Activated CD4-positive, alpha-beta T cell treated with anti-CD3 and anti-CD28 coated beads, Interleukin-2, amount 10 ng/mL, durations not matched to agents 24 days and 14 days (primary cell): ENCODE measurements at regions of chr1 and their contacts with region 1.

Region 1: DNA sequence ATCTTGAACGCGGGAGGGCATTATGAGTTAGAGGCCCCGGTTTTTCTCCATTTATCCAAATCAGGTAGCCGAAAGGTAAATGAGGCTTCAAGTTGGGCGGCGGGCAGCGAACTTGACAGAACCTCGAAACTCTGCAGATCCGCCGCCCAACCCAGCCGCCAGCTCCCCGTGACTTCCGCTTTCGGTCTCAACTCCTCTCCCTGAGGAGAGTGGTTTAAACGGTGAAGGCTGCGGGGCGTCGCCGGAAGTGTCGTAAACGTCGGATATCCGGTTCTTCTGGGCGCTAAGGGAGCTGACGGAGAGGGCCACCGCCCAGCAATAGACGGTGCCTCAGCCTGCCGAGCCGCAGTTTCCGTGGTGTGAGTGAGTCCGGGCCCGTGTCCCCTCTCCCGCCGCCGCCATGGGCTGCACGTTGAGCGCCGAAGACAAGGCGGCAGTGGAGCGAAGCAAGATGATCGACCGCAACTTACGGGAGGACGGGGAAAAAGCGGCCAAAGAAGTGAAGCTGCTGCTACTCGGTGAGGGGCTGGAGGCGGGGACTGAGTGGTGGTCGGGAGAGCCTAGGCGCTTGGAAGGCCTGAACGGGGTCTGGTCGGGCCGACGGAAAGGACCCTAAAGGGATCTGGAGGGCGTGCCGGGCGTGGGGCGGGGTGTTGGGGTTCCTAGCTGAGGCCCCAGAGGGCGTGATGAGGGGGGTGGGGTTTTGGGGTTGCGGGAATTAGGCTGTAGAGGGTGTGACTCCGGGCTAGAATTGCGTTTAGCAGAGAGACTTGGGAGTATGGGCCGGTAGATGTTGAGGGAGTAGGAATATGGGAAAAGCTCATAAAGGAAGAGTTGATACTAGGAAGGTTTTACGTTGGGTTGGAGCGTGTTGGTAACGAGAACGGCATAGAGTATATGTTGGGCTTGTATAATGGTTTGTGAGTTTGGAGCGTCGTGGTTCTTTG is at the start of gene GNAI3:
- DNase-seq: peak; percentile 99
- H3K4me3 Mint-ChIP-seq: peak within 1 kb of the TSS; percentile 95
- H3K27ac Mint-ChIP-seq: peak within 1 kb of the TSS; percentile 96
- H3K4me1 Mint-ChIP-seq: peaks cover 46% of the 10 kb centered on the region
- H3K27me3 Mint-ChIP-seq: no peaks in the 10 kb centered on the region
- total RNA-seq, gene GNAI3: 8.7 and 8.8 TPM in 2 replicates

Region 2: DNA sequence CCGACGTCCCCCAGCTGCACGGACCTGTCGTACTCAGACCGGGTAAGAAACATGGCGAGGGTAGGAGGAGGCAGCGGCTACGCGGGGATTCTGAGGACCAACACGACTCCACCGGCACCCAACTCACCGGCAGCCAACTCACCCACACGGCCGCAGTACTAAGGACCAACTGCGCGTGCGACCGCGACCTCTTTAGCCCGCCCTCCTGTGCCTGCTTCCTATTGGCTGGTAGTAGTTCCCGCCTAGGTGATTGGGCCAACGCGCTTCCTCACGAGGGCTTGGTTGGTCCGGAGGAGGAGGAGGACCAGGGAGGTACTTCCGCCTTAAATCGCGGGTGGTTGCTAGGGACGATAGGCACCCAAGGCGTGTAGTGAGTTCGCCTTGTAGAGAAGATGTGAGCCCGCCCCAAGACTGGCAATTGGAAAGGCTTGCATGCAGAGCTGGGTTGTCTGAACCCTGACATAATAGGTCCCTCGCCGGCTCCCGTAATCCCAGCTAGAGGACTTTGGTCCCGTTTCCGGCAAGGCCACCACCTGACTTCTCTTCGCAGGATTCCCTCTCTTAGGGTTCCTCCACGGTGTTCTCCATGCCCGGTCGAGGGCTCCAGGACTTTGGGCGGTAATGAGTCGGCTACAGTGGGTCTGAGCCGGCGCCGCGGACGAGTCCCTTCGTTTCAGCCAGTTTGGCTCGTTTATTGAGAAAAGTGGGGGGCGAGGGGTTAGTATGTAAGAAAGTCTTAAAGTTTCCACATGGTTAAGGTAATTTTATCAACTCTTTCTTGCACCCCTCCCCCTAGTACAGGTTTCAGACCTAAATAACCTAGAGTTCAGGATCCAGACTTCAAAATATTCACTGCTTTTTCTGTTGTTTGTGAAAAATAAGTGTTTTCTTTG is 122.1 kb before region 1 on chr1 and contains the start of gene PSMA5:
- intact Hi-C with region 1: loop called (anchors 5 kb)
- DNase-seq: peak; percentile 98
- H3K4me3 Mint-ChIP-seq: peak within 1 kb of the TSS; percentile 94
- H3K27ac Mint-ChIP-seq: peak within 1 kb of the TSS; percentile 97
- H3K4me1 Mint-ChIP-seq: peaks cover 27% of the 10 kb centered on the region
- H3K27me3 Mint-ChIP-seq: peaks cover 2% of the 10 kb centered on the region
- total RNA-seq, gene PSMA5: 262 and 270 TPM in 2 replicates

Region 3: DNA sequence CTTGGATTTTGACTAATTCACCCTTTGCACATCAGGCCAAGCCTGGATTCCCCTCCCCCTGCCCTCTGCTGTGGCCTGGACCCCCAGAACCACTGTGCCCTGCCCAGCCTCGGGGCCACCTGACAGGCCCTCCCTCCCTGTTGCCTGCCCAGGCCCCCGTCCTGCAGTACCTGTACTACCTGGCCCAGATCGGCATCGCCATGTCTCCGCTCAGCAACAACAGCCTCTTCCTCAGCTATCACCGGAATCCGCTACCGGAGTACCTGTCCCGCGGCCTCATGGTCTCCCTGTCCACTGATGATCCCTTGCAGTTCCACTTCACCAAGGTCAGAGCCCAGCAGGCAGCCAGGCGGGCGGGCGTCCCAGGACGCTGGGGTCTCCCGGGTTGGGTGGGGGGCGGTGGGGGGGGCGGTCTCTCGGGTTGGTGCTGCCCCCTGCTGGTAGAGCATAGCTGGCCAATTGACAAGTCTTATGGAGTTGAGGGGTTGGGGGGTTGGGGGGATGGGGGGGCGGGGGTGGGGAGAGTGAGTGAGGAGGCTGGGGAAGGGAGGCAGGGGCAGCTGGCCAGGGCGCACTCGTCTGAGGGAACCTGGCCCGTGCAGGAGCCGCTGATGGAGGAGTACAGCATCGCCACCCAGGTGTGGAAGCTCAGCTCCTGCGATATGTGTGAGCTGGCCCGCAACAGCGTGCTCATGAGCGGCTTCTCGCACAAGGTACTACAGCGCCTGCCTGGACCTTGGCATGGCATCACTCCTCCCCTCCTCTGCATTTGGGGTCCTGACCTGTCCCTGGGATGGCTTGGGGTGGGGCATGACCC is 81.7 kb after region 1 on chr1:
- intact Hi-C with region 1: loop called (anchors 1 kb)
- DNase-seq: peak; percentile 77
- H3K4me3 Mint-ChIP-seq: no peak overlapping the region
- H3K27ac Mint-ChIP-seq: no peak overlapping the region
- H3K4me1 Mint-ChIP-seq: peaks cover 16% of the 10 kb centered on the region
- H3K27me3 Mint-ChIP-seq: no peaks in the 10 kb centered on the region

Region 4: DNA sequence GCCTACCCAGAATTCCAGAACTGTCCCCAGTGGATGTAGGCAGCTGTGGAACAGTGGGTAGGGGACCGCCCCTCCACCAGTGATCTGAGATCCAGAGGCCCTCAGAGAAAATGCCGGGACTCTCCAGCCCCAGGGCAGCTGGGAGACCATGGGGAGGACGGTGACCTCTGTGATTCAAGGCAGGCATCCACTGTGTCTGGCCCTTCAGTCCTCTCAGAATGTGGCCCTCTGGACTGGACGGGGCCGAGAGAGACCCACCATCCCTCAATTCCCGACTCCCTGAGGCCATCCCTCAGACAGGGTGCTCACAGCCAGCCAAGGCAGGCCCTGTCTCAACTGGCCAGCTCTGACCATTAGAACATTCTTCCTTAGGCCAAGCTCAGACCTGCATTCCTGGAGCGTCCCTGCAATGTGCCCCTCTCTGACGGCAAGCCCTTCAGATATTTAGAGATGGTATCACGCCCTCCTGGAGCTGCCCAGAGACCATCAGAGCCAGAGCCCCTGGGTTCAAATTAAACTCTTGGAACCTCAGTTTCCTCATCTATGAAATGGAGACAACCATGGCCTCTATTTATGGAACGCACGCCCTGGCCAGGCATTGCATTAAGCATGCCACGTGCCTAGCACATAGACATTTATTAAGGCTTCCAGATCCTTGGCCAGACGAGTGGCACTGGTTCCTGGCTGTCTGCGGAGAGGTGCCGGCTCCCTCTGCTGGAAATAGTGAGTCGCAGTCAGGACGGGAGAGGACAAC is 224.7 kb after region 1 on chr1:
- intact Hi-C with region 1: loop called (anchors 1 kb)
- DNase-seq: peak; percentile 91
- H3K4me3 Mint-ChIP-seq: no peak overlapping the region
- H3K27ac Mint-ChIP-seq: no peak overlapping the region
- H3K4me1 Mint-ChIP-seq: peaks cover 20% of the 10 kb centered on the region
- H3K27me3 Mint-ChIP-seq: peaks cover 3% of the 10 kb centered on the region

Region 5: GRCh38 chr1:109984456-109985275 is 436.1 kb after region 1 on chr1 and contains the start of gene AHCYL1:
- intact Hi-C with region 1: loop called (anchors 2 kb)
- DNase-seq: peak; percentile 100
- H3K4me3 Mint-ChIP-seq: peak within 1 kb of the TSS; percentile 99
- H3K27ac Mint-ChIP-seq: peak within 1 kb of the TSS; percentile 97
- H3K4me1 Mint-ChIP-seq: peaks cover 37% of the 10 kb centered on the region
- H3K27me3 Mint-ChIP-seq: peaks cover 1% of the 10 kb centered on the region
- total RNA-seq, gene AHCYL1: 67.1 and 75.3 TPM in 2 replicates